ENCODE measurements at regions of chr12 and their contacts with region 1.

Region 1: DNA sequence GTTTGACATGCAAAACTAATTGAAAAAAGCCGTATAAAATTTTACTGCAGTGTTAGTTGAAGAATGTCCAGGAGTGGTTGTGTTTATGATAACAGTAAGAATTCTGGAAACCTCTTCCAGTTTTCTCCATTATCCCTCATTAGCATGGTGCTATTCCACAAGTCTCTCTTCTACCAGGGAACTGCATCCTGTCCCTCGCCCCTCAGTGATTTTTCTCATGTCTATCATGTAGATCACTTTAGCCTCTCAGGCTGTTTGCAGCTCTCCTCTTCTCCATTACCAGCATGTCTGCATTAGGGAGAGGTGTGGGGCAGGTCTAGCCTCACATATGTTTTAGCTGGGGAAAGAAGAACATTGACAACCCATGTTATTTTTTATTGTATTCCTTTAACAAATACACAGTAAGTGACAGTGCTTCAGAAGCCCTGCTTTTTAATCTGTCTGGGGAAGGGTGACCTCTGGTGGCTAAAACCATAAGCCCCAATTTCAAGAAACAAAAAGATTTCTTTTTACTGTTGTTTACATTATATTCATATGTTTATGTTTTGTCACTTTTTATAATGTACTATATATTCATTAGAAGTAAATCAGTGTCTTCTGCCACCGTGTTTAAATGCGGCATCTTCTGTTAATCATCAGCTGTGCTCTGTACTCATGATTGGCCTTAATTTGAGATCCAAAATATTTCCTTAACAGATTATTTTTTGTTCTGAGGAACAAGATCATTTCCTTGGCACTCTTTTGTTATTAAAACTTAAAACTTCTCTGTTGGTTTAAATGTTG is 70.7 kb downstream of the RASSF8 start:
- DNase-seq: no peak
- ATAC-seq: peak; percentile 77
- H3K4me3 ChIP-seq: no peak overlapping the region
- H3K27ac ChIP-seq: peak overlapping the region; percentile 82; the same call in 1 of the 2 replicates
- H3K4me1 ChIP-seq: peaks cover 71% of the 10 kb centered on the region
- H3K27me3 ChIP-seq: no peaks in the 10 kb centered on the region
- CTCF ChIP-seq: peak; percentile 97

Region 2: DNA sequence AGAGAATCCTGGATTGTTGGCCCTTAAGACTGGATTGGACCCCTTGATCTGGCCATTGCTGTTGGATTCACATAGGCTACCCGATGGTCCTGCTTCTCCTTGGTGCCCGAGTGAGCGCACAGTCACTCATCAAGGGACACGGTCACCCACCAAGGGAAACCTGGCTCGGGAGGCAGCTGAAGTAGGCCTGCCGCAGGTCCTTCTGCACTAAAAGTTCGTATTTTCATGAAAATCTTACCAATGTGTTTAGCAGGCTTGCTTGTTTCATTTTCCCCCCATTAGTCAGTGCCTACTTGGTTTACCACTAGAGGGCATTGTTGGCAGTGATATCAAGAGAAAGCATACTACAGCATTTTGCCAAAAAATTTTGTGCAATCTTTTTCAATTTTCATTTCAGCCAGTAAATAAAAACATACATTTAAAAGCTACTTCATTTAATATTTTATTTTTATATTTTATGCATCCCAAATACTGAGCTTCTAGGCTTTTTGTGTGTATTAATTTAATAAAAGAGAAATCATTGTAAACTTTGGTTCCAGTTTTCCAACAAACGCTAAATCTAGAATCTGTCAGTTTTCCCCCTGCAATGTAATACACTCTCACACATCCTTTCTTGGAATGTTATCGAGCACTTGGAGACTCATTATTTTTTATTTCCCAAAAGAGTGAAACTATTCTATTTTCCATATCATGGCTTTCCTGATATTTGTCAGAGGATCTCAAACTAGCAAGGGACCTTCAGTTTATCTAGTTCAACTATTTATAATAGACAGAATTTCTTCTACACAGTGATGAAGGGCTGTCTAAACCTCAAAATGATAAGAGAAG is 592.7 kb before region 1 on chr12:
- CTCF ChIA-PET with region 1: no interaction called
- POLR2A ChIA-PET with region 1: no interaction called
- in situ Hi-C with region 1: no loop called
- intact Hi-C with region 1: loop called (anchors 1 kb)
- DNase-seq: peak; percentile 82
- ATAC-seq: peak; percentile 90
- H3K4me3 ChIP-seq: peak overlapping the region; percentile 48 to 66
- H3K27ac ChIP-seq: peak overlapping the region; percentile 88
- H3K4me1 ChIP-seq: peaks cover 3% of the 10 kb centered on the region; the same call in 1 of the 2 replicates
- H3K27me3 ChIP-seq: no peaks in the 10 kb centered on the region
- CTCF ChIP-seq: peak; percentile 96

Region 3: DNA sequence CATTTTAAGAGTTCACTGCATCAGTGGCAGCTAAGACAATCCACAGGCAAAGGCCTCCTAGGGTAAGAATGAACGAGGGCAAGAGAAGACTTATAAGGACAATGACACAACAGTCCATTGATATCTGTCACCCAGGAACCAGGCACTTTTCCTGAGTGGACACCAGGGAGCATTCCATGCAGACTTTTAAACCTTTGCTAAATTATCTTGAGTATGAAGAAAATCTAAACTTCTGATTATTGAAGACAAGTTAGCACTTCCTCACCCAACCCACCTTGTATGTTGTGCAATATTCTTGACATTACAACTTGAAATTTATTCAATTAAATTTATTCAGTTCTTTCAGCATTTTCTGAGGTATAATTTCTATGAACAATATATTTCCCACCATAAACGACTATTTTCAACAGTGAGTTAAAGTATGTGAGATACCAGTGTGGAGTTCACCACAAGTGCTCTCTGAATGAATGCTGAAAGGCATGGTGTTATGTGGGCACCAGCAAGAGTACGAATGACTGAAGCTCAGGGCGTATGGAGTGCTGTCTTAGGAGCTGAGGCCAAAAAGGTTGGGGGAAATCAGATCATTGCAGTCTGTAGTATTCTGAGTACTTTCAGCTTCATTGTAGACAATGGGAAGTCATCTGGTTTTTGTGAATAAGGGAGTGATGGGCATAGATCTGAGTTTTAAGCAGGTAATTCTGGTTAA is 351.8 kb before region 1 on chr12:
- CTCF ChIA-PET with region 1: no interaction called
- POLR2A ChIA-PET with region 1: no interaction called
- in situ Hi-C with region 1: no loop called
- intact Hi-C with region 1: loop called (anchors 1 kb)
- DNase-seq: no peak
- ATAC-seq: peak; percentile 65; the same call in 1 of the 2 replicates
- H3K4me3 ChIP-seq: no peak overlapping the region
- H3K27ac ChIP-seq: no peak overlapping the region
- H3K4me1 ChIP-seq: no peaks in the 10 kb centered on the region
- H3K27me3 ChIP-seq: peaks cover 10% of the 10 kb centered on the region
- CTCF ChIP-seq: peak; percentile 54

Region 4: DNA sequence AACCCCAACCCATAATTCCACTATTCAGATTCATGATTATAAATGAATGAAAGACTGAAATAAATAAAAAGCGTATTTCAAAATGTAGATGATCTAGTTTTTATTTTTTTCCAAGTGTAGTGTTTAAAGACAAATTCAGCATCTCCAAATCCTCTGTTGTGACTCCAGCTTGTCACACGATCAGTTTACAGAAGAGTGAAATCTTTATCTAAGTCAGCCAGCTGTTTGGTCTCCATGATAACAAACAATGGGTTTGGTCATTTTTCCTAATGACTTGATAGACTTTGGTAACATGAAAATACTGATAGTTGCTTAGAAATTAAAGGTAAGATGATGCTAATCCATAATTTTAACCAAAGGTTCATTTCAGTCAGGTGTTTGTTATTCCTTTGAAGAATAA is 185.2 kb before region 1 on chr12:
- CTCF ChIA-PET with region 1: no interaction called
- POLR2A ChIA-PET with region 1: no interaction called
- in situ Hi-C with region 1: no loop called
- intact Hi-C with region 1: no loop called
- DNase-seq: no peak
- ATAC-seq: no peak
- H3K4me3 ChIP-seq: no peak overlapping the region
- H3K27ac ChIP-seq: no peak overlapping the region
- H3K4me1 ChIP-seq: peaks cover 5% of the 10 kb centered on the region; the same call in 1 of the 2 replicates
- H3K27me3 ChIP-seq: peaks cover 8% of the 10 kb centered on the region; the same call in 1 of the 2 replicates
- CTCF ChIP-seq: no peak

Region 5: GRCh38 chr12:25960143-25960542 is 69.0 kb before region 1 on chr12:
- CTCF ChIA-PET with region 1: no interaction called
- POLR2A ChIA-PET with region 1: interaction called, 3 read pairs
- in situ Hi-C with region 1: no loop called
- intact Hi-C with region 1: loop called (anchors 5 kb)
- DNase-seq: no peak
- ATAC-seq: no peak
- H3K4me3 ChIP-seq: peak overlapping the region; percentile 76 to 91
- H3K27ac ChIP-seq: peak overlapping the region; percentile 91
- H3K4me1 ChIP-seq: peaks cover 38% of the 10 kb centered on the region
- H3K27me3 ChIP-seq: no peaks in the 10 kb centered on the region
- CTCF ChIP-seq: peak; percentile 83